ENCODE measurements at regions of chr11 and their contacts with region 1.

Region 1: DNA sequence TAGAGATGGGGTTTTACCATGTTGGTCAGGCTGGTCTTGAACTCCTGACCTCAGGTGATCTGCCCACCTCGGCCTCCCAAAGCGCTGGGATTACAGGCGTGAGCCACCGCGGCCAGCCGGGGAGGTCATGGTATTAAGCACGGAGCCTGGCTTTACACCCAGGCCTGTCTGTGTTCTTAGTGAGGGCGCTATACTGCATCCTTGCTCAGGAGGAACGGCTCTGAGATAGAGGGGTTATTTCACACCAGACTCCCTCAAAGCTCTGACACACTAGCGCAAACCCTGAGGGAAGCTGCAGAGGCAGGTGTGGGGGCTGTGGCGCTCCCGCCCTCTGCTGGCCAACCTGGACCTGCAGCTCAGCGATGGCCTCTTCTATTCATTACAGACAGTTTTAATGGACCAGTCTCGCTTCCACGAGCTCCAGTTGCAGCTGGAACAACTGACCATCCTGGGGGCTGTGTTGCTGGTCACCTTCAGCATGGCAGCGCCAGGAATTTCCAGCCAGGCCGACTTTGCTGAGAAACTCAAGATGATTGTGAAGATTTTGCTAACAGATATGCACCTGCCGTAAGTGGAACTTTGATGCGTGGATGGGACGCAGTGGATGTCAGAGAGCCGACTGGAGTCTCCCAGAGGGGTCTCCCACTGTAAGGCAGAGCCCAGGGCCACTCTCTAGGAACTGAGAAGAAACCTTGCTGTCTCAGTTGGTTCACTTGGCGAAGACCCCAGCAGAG is 26.2 kb downstream of the TCP11L1 start:
- DNase-seq: peak; percentile 77
- ATAC-seq: peak; percentile 84

Region 2: DNA sequence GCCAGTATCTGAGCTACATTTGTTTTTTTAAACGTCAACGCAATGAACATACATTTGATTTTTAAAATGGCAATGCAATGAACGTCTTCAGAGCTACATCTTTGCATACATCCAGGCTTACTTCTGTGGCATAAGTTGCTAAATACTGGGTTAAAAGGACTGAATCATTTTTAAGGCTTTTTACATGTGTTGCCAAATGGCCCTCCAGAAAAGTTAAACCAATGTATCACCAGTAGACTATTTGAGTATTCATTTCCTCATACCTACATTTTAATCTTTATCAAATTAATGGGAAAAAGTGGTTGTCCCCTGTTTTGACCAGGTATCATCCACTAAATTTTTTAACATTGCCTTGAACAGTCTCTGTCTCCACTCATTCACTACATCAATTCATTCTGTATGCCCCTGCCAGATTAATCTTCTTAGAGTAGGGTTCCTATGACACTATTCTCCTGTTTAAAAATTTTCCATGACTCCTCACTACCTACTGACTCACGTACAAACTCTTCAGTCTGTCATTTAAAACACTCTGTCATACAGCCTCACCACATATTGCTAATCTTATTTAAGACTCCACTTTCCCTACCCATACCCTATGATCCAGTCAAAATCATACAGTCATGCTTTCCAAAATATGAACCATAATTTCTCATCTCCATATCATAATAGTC is 248.3 kb before region 1 on chr11:
- intact Hi-C with region 1: loop called (anchors 10 kb)
- DNase-seq: no peak
- ATAC-seq: no peak

Region 3: DNA sequence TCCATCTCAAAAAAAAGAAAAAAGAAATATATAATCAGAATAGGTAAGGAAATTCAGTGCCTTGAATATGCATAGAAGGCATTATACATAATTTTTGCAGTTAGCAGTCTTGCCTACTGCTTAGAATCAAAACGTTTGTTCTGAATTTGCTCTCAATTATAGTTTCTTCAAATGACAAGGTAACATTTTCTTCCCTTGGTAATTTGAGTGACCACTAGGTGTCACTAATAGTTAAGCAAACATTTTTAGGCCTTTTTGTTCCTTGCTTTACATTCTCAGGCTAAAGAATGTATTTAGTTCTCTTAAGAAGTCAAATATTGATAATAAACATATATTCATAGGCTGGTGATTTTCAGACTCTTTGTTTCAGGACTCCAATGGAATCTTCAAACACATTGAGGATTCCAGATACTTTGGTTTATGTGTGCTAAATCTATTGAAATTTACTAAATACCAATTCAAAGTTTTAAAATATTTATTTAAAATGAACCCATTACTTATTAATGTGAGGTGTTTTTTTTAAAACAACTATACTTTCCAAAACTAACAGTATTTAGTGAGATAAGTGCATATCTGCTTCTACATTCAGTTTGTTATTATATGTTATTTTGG is 105.0 kb before region 1 on chr11:
- intact Hi-C with region 1: loop called (anchors 2 kb)
- DNase-seq: no peak
- ATAC-seq: no peak

Region 4: GRCh38 chr11:33128739-33129138 is 63.1 kb after region 1 on chr11:
- intact Hi-C with region 1: no loop called
- DNase-seq: no peak
- ATAC-seq: no peak